ENCODE measurements at regions of chr6 and their contacts with region 1.

Region 1: DNA sequence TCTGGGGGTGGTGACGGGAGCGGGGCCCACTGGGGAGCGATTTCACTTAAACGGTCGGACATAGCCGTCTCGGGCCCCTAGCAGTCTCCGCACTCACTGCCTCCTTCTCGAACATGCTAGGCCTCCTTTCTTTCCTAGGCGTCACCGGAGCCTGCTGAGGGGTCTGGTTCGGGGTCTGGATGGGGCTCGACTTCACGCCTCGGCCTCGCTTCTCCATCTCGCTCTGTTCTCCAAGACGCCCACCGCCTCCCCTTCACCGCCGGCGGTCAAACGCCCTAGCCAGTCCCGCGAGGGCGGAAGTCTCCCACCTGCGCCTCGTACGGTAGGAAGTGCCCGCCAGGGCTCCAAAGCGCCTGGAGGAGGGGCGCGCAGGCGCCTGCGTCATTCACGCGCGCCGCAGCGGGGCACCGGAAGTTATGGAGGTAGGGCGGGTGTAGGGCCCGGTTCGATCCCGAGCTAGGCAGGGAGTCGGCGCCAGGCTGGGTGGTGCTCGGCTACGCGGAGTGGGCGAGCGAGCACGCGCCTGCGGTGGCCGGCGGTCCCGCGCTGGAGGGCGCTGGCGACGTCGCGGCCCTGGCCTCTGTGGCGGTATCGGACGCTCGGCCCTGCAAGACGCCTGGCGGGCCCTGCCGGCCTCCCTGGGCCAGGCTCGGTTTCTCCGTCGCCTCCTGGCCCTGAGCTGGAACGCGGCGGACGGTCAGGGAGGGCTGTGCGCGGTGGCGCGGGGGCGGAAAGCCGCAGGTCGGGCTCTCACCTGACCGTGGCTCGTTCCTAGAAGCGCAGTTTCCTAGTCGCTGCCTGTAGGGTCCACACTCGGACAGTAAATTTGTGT is at the starts of genes DYNLT2 and ERMARD:
- DNase-seq: peak; percentile 96
- ATAC-seq: peak; percentile 95
- H3K4me3 ChIP-seq: peak within 1 kb of the TSS; percentile 88 to 91 (median 90)
- H3K27ac ChIP-seq: peak within 1 kb of the TSS; percentile 96
- H3K4me1 ChIP-seq: peaks cover 48% of the 10 kb centered on the region
- H3K27me3 ChIP-seq: no peaks in the 10 kb centered on the region; a peak in 1 of 5 replicates
- CTCF ChIP-seq: peak; percentile 52
- EP300 ChIP-seq: peak in 1 of 2 experiments; percentile 68; a peak in 3 of 4 replicates
- POLR2A ChIP-seq: peak; percentile 90 to 99
- RAD21 ChIP-seq: peak; percentile 88
- total RNA-seq, gene DYNLT2: 3.1 and 4.3 TPM in 2 replicates
- total RNA-seq, gene ERMARD: 8.4 and 10.7 TPM in 2 replicates

Region 2: DNA sequence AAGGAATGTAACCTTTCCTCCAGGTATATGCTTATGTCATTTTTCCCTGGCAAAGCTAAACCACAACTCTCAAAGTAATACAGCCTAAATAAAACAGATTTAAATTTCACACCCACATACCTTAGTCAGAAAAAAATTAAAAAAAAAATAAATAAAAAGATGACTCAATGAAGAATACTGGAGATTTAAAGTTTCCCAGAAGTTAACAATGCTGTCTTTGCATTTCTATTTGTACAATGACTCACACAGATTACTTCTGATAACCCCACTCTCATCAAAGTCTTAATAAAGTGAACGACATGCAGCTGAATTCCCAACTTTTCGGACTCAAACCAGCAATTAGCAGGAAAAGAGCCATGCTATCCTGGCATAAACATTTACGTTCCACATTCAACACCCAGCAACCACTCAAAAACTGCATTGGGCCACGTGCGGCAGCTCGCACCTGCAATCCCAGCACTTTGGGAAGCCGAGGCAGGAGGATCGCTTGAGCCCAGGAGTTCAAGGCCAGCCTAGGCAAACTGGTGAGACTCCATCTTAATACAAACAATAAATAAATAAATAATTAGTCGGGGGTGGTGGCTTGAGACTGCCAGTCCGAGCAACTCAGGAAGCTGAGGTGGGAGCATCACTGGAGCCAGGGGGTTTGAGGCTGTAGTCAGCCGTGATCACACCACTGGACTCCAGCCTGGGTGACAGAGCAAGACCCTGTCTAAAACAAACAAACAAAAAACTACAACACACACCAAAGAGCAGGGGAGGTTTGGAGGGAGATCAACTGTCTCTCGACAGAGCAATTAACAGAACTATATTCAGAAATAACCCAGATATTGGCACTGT is 180.1 kb before region 1 on chr6:
- CTCF ChIA-PET with region 1: no interaction called
- POLR2A ChIA-PET with region 1: no interaction called
- in situ Hi-C with region 1: no loop called
- intact Hi-C with region 1: no loop called
- DNase-seq: peak; percentile 52
- ATAC-seq: no peak
- H3K4me3 ChIP-seq: no peak overlapping the region
- H3K27ac ChIP-seq: no peak overlapping the region
- H3K4me1 ChIP-seq: peaks cover 9% of the 10 kb centered on the region
- H3K27me3 ChIP-seq: no peaks in the 10 kb centered on the region
- CTCF ChIP-seq: no peak
- EP300 ChIP-seq: no peak
- POLR2A ChIP-seq: no peak
- RAD21 ChIP-seq: no peak

Region 3: GRCh38 chr6:169741344-169741743 is 10.1 kb before region 1 on chr6:
- CTCF ChIA-PET with region 1: no interaction called
- POLR2A ChIA-PET with region 1: interaction called, 16 read pairs
- in situ Hi-C with region 1: no loop called
- intact Hi-C with region 1: no loop called
- DNase-seq: no peak
- ATAC-seq: no peak; the same call in none of the 3 replicates
- H3K4me3 ChIP-seq: no peak overlapping the region
- H3K27ac ChIP-seq: no peak overlapping the region
- H3K4me1 ChIP-seq: peaks cover 2% of the 10 kb centered on the region; the same call in 1 of the 2 replicates
- H3K27me3 ChIP-seq: peaks cover 0 to 2% of the 10 kb centered on the region in 2 experiments; a peak in 2 of 5 replicates
- CTCF ChIP-seq: no peak
- EP300 ChIP-seq: no peak
- POLR2A ChIP-seq: no peak
- RAD21 ChIP-seq: no peak

Measured in HepG2 (cell line).